ENCODE measurements at regions of chr21 and their contacts with region 1.

Region 1: DNA sequence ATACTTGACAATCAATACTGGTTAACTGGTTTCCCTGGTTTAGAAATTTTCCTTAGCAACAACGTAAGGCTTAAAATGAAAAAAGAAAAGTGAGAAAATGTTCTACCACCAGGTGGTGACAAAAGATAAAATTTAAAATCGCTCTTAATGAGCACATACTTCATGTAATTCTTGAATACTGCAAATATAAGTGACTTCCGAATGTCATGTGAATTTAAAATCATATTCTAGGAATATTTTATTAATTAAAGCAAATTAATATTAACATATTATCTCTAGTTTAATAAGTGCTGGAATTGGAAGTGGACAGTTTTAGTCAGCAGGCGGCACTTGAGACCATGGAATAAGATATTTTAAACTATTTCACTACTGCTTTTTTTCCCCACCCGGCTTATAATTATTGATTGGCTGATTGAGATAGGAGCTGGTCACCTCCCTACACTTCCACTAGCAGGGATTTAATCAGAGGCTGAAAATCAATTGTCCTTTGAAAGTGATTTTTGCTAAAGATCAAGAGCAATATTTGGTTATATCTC is 5.0 kb upstream of the ADAMTS1 start:
- DNase-seq: peak in 1 of 2 experiments; percentile 28
- H3K4me3 ChIP-seq: no peak overlapping the region
- H3K4me3 Mint-ChIP-seq: no peak overlapping the region
- H3K27ac Mint-ChIP-seq: no peak overlapping the region
- H3K4me1 ChIP-seq: no peaks in the 10 kb centered on the region
- H3K4me1 Mint-ChIP-seq: peaks cover 6% of the 10 kb centered on the region
- H3K27me3 ChIP-seq: no peaks in the 10 kb centered on the region
- H3K27me3 Mint-ChIP-seq: no peaks in the 10 kb centered on the region
- CTCF ChIP-seq: peak; percentile 23 to 71

Region 2: DNA sequence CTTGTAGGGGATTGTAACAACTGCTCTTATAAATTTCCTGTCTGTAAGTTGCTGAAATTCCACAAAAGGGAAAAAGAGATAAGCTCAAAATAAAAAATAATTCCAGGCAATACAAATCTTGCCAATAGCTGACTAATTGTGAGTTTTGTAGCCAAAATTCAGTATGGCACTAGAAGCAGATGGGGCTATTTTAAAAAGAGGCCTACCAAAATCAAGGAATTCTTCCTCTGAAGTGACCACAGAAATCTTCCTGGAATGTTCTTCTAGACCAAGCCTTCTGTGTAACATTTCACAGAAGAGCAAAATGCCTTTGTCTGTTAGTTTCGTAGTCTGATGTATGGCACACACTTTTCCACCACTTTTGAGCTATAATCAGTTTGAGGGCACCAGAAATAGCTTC is 404.7 kb before region 1 on chr21:
- CTCF ChIA-PET with region 1: no interaction called
- POLR2A ChIA-PET with region 1: no interaction called
- intact Hi-C with region 1: no loop called
- DNase-seq: no peak
- H3K4me3 ChIP-seq: no peak overlapping the region
- H3K4me3 Mint-ChIP-seq: no peak overlapping the region
- H3K27ac Mint-ChIP-seq: no peak overlapping the region
- H3K4me1 ChIP-seq: no peaks in the 10 kb centered on the region
- H3K4me1 Mint-ChIP-seq: no peaks in the 10 kb centered on the region
- H3K27me3 ChIP-seq: no peaks in the 10 kb centered on the region
- H3K27me3 Mint-ChIP-seq: peaks cover 2% of the 10 kb centered on the region
- CTCF ChIP-seq: no peak

Region 3: DNA sequence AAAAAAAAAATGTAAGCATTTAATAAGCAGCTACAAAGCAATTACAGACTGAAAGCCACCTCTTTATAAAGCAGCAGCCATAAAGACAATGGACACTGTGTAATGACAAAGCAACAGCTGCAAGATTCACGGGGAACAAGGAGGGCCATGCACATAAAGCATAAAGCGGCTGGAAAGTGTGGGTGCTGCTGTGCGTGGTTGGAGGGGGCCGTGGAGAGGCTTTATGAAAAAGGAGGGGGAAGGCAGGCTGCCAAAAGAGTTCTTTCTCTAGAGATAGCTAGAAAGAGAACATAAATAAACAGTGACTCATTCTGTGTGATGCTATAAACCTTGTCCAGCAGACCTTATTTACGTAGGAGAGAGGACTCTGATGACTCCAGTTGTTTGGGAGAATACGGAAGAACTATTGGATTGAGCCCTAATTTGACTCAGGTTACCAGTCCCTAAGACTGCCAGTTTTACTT is 54.3 kb before region 1 on chr21:
- CTCF ChIA-PET with region 1: no interaction called
- POLR2A ChIA-PET with region 1: no interaction called
- intact Hi-C with region 1: no loop called
- DNase-seq: no peak
- H3K4me3 ChIP-seq: no peak overlapping the region
- H3K4me3 Mint-ChIP-seq: no peak overlapping the region
- H3K27ac Mint-ChIP-seq: no peak overlapping the region
- H3K4me1 ChIP-seq: no peaks in the 10 kb centered on the region; the same call in 1 of the 2 replicates
- H3K4me1 Mint-ChIP-seq: peaks cover 7% of the 10 kb centered on the region
- H3K27me3 ChIP-seq: no peaks in the 10 kb centered on the region
- H3K27me3 Mint-ChIP-seq: no peaks in the 10 kb centered on the region
- CTCF ChIP-seq: no peak

Region 4: DNA sequence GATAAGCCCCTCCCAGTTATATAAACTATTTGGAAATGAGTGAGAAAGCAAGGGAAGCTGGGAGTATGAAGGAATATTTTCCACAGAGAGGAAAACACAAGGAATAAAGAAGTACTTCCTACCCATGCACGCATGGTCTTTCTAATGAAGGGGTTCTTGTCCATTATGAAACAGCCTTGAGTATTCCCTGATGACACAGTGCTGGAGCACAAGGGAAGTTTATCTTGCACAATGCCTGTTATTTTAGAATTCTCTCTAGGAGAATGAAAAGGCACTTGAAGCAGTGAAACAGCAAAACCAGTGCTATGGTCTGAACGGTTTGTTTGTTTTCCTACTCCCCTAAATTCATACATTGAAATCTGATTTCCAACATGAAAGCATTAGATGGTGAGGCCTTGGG is 33.6 kb after region 1 on chr21:
- CTCF ChIA-PET with region 1: no interaction called
- POLR2A ChIA-PET with region 1: no interaction called
- intact Hi-C with region 1: loop called (anchors 1 kb)
- DNase-seq: no peak
- H3K4me3 ChIP-seq: no peak overlapping the region
- H3K4me3 Mint-ChIP-seq: no peak overlapping the region
- H3K27ac Mint-ChIP-seq: peak overlapping the region; percentile 58
- H3K4me1 ChIP-seq: peaks cover 21% of the 10 kb centered on the region
- H3K4me1 Mint-ChIP-seq: peaks cover 11% of the 10 kb centered on the region
- H3K27me3 ChIP-seq: no peaks in the 10 kb centered on the region
- H3K27me3 Mint-ChIP-seq: no peaks in the 10 kb centered on the region
- CTCF ChIP-seq: no peak

Region 5: DNA sequence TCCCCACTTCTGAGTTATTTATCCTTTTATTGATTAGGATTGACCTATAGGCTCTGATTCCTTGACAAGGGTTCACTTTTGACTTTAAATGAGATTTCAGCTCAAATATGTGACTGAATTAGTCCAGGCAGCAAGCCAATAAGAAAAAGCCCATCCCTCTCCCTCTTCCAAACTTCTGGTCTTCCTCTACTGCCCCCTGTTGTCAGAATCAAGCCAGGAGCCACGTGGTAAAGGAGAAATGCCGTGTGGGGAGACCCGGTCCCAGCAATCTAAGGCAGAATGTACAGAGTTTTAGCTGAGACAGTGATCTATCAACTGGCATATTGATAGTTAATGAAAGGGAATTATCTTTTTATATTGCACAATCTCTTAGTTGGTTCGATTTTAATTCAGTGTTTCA is 111.5 kb after region 1 on chr21:
- CTCF ChIA-PET with region 1: no interaction called
- POLR2A ChIA-PET with region 1: no interaction called
- intact Hi-C with region 1: loop called (anchors 5 kb)
- DNase-seq: no peak
- H3K4me3 ChIP-seq: no peak overlapping the region
- H3K4me3 Mint-ChIP-seq: no peak overlapping the region
- H3K27ac Mint-ChIP-seq: no peak overlapping the region
- H3K4me1 ChIP-seq: no peaks in the 10 kb centered on the region
- H3K4me1 Mint-ChIP-seq: no peaks in the 10 kb centered on the region
- H3K27me3 ChIP-seq: no peaks in the 10 kb centered on the region
- H3K27me3 Mint-ChIP-seq: no peaks in the 10 kb centered on the region
- CTCF ChIP-seq: no peak

Region 6: DNA sequence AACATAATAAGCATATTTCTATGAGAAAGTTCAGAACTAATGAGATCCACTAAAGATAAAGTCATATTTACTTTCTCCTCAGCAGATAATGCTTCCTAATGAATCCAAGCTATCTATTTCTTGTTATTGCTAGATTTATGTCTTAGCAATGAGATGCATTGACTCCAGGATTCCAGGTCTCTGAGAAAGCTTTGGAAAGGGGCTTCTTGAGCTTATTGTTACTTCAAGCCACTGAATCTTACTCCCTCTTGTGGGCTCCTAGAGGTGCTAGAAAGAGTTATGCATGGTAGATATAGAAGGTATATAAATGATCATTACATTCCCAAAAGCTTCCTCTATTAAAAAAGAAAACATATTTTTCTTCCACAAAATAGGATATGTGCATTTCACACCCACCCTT is 363.1 kb after region 1 on chr21:
- CTCF ChIA-PET with region 1: no interaction called
- POLR2A ChIA-PET with region 1: no interaction called
- intact Hi-C with region 1: loop called (anchors 1 kb)
- DNase-seq: no peak
- H3K4me3 ChIP-seq: no peak overlapping the region
- H3K4me3 Mint-ChIP-seq: no peak overlapping the region
- H3K27ac Mint-ChIP-seq: no peak overlapping the region
- H3K4me1 ChIP-seq: no peaks in the 10 kb centered on the region
- H3K4me1 Mint-ChIP-seq: no peaks in the 10 kb centered on the region
- H3K27me3 ChIP-seq: no peaks in the 10 kb centered on the region
- H3K27me3 Mint-ChIP-seq: no peaks in the 10 kb centered on the region
- CTCF ChIP-seq: peak in 1 of 2 experiments; percentile 27

Region 7: GRCh38 chr21:27362249-27362648 is 512.1 kb after region 1 on chr21:
- CTCF ChIA-PET with region 1: no interaction called
- POLR2A ChIA-PET with region 1: no interaction called
- intact Hi-C with region 1: loop called (anchors 10 kb)
- DNase-seq: peak in 1 of 2 experiments; percentile 20
- H3K4me3 ChIP-seq: no peak overlapping the region
- H3K4me3 Mint-ChIP-seq: no peak overlapping the region
- H3K27ac Mint-ChIP-seq: no peak overlapping the region
- H3K4me1 ChIP-seq: peaks cover 30% of the 10 kb centered on the region
- H3K4me1 Mint-ChIP-seq: peaks cover 8% of the 10 kb centered on the region
- H3K27me3 ChIP-seq: no peaks in the 10 kb centered on the region
- H3K27me3 Mint-ChIP-seq: no peaks in the 10 kb centered on the region
- CTCF ChIP-seq: peak in 1 of 2 experiments; percentile 33

Region 8: DNA sequence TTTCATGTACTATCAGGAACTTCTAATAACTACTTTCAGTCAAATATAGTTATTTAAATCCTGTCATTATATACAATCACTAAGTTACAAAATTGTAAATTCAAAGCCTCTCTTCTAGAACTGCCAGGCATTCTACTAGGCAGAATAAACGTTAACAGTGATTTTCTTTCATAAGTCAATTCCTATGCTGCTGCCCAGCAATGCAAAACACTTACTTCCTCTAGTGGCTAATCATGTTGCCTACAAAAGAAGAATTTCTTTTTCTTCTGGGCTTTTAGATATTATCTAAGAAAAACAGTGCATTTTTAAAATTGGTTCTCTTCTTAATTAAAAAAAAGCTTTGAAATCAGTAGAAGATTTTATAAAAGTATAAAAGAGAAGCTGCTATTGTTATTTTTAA is 626.5 kb after region 1 on chr21:
- CTCF ChIA-PET with region 1: no interaction called
- POLR2A ChIA-PET with region 1: no interaction called
- intact Hi-C with region 1: loop called (anchors 2 kb)
- DNase-seq: no peak
- H3K4me3 ChIP-seq: no peak overlapping the region
- H3K4me3 Mint-ChIP-seq: no peak overlapping the region
- H3K27ac Mint-ChIP-seq: no peak overlapping the region
- H3K4me1 ChIP-seq: no peaks in the 10 kb centered on the region
- H3K4me1 Mint-ChIP-seq: peaks cover 6% of the 10 kb centered on the region
- H3K27me3 ChIP-seq: no peaks in the 10 kb centered on the region
- H3K27me3 Mint-ChIP-seq: no peaks in the 10 kb centered on the region
- CTCF ChIP-seq: peak in 1 of 2 experiments; percentile 31

Region 9: DNA sequence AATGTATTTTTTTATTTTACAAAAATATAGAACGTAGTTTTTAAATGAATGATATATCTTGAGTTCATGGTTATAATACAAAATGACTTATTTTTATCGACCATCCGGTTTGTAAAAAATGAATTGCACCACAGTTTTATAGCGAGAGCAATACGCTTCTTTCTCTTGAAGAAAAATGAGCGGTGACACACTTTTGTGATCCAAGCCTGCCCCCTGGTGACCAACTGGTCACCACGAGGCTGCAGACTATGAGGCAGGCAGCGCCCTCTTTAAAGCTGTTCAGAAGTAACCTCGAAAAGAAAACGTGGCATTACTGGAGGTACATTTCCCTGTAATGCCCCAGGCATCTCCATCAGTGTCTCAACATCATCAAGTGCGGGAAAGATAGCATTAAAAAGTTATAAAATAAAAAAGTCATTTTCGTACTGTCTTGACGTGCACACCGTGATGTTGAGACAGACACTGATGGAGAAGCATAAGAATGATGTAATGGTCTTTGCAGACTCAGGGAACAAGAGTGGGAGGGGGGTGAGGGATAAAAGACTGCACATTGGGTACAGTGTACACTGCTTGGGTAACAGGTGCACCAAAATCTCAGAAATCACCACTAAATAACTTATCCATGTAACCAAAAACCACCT is 850.9 kb after region 1 on chr21:
- CTCF ChIA-PET with region 1: no interaction called
- POLR2A ChIA-PET with region 1: no interaction called
- intact Hi-C with region 1: loop called (anchors 1 kb)
- DNase-seq: peak; percentile 72 to 79
- H3K4me3 ChIP-seq: no peak overlapping the region
- H3K4me3 Mint-ChIP-seq: no peak overlapping the region
- H3K27ac Mint-ChIP-seq: no peak overlapping the region
- H3K4me1 ChIP-seq: no peaks in the 10 kb centered on the region
- H3K4me1 Mint-ChIP-seq: no peaks in the 10 kb centered on the region
- H3K27me3 ChIP-seq: no peaks in the 10 kb centered on the region
- H3K27me3 Mint-ChIP-seq: peaks cover 7% of the 10 kb centered on the region
- CTCF ChIP-seq: peak; percentile 86 to 90